ENCODE measurements at regions of chr3 and their contacts with region 1.

Region 1: DNA sequence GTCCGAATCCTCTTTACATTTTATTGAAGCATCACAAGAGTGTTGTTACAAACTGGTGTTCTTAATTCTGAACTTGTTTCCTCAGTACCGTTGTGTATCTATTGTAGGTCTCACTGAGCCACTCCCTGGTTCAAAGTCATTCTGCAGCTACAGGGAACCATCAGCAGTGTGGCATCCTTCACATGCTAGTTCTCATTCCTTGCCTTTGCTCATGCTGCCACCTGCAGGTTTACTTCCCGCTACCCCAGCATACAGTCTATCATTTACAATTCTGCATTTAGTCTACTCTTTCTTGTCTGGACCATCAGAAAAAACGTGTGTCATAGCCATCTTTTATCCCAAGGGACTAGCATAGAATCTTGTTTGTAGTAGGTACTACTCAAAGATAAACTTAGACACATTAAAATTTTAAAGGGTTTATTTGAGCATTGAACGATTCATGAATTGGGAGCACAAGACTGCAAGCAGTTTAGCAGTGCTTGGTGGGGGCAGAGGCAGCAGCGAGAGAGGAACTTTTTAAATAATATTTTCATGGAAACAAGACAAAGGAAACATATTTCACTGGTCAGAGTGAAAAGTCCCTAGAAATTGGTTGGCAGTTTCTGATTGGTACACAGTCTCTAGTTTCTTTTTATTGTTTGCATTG is 402.1 kb downstream of the CADM2 start:
- DNase-seq: peak; percentile 58
- ATAC-seq: peak; percentile 100
- H3K4me3 ChIP-seq: no peak overlapping the region
- H3K27ac ChIP-seq: no peak overlapping the region
- H3K4me1 ChIP-seq: no peaks in the 10 kb centered on the region
- H3K27me3 ChIP-seq: no peaks in the 10 kb centered on the region
- CTCF ChIP-seq: peak; percentile 79
- EP300 ChIP-seq: no peak
- POLR2A ChIP-seq: no peak
- RAD21 ChIP-seq: peak; percentile 58

Region 2: GRCh38 chr3:84547971-84548970 is 812.6 kb before region 1 on chr3:
- CTCF ChIA-PET with region 1: interaction called, 14 read pairs
- POLR2A ChIA-PET with region 1: no interaction called
- in situ Hi-C with region 1: loop called (anchors 10 kb)
- intact Hi-C with region 1: loop called (anchors 1 kb)
- DNase-seq: peak; percentile 36
- ATAC-seq: peak; percentile 97
- H3K4me3 ChIP-seq: peak overlapping the region in 2 of 3 experiments; percentile 15 to 54; a peak in 2 of 6 replicates
- H3K27ac ChIP-seq: no peak overlapping the region
- H3K4me1 ChIP-seq: peaks cover 8% of the 10 kb centered on the region
- H3K27me3 ChIP-seq: no peaks in the 10 kb centered on the region
- CTCF ChIP-seq: peak; percentile 75
- EP300 ChIP-seq: no peak
- POLR2A ChIP-seq: no peak
- RAD21 ChIP-seq: peak; percentile 32; the same call in 1 of the 2 replicates

Region 3: GRCh38 chr3:84958495-84959469 is 402.1 kb before region 1 on chr3 and contains the start of gene CADM2:
- CTCF ChIA-PET with region 1: no interaction called
- POLR2A ChIA-PET with region 1: no interaction called
- in situ Hi-C with region 1: loop called (anchors 25 kb)
- intact Hi-C with region 1: no loop called
- DNase-seq: peak; percentile 76
- ATAC-seq: peak; percentile 99
- H3K4me3 ChIP-seq: peak within 1 kb of the TSS; percentile 54 to 74 (median 65); a peak in 5 of 6 replicates
- H3K27ac ChIP-seq: no peak within 1 kb of the TSS
- H3K4me1 ChIP-seq: peaks cover 14% of the 10 kb centered on the region
- H3K27me3 ChIP-seq: peaks cover 1 to 24% of the 10 kb centered on the region in 2 experiments; a peak in 3 of 5 replicates
- CTCF ChIP-seq: peak; percentile 42
- EP300 ChIP-seq: no peak
- POLR2A ChIP-seq: no peak
- RAD21 ChIP-seq: no peak
- total RNA-seq, gene CADM2: not detected in 2 replicates

Region 4: DNA sequence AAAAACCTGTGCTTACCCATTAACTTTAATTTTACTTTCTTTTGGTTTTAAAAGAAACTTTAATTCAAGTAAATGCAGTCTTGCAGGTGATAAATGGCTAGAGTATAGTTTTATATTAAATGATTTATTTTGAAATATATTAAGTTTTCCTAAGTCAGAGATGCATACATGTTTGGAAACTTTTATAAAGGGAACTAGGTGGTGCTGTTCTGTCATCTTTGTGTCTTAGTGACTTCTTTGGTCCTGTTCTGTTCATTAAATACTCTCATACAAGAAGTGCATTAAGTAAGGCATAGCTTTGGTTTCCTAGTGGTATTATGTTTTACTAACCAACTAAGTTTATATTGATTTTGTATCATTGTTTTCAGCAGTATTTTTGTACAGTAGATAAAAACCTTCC is 386.5 kb before region 1 on chr3:
- CTCF ChIA-PET with region 1: no interaction called
- POLR2A ChIA-PET with region 1: no interaction called
- in situ Hi-C with region 1: loop called (anchors 25 kb)
- intact Hi-C with region 1: loop called (anchors 2 kb)
- DNase-seq: peak; percentile 15
- ATAC-seq: peak; percentile 50; the same call in 1 of the 3 replicates
- H3K4me3 ChIP-seq: no peak overlapping the region
- H3K27ac ChIP-seq: no peak overlapping the region
- H3K4me1 ChIP-seq: no peaks in the 10 kb centered on the region
- H3K27me3 ChIP-seq: no peaks in the 10 kb centered on the region; a peak in 1 of 5 replicates
- CTCF ChIP-seq: peak; percentile 39
- EP300 ChIP-seq: no peak
- POLR2A ChIP-seq: no peak
- RAD21 ChIP-seq: no peak

Region 5: DNA sequence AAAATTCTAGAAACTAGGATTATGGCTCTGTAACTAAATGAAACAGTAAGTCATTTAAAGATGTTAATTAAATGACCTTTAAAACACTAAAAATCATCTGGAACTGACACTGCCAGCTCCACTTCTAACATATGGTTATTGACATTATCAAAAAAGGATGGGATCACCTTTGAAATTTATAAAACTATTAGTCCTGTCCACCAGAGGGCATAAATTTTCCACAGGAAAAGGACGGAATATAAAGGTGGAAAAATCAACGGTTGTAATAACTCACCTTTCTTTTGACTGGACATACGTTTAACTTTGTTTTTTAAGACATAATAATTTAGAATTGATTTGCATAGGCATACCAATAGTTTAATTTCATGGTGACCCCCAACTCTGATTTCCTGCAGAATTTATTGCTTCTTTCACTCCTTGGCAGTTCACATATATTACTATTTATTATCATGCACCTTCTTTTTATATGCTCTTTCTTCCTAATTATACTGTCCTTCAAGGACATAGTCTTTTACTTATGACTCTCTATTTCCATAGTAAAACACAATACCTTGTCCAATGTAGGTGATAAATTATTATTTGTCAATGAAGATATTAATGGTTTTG is 56.4 kb before region 1 on chr3:
- CTCF ChIA-PET with region 1: interaction called, 9 read pairs
- POLR2A ChIA-PET with region 1: no interaction called
- in situ Hi-C with region 1: no loop called
- intact Hi-C with region 1: loop called (anchors 1 kb)
- DNase-seq: peak; percentile 3
- ATAC-seq: peak; percentile 32; the same call in 1 of the 3 replicates
- H3K4me3 ChIP-seq: no peak overlapping the region
- H3K27ac ChIP-seq: no peak overlapping the region
- H3K4me1 ChIP-seq: no peaks in the 10 kb centered on the region
- H3K27me3 ChIP-seq: no peaks in the 10 kb centered on the region; a peak in 1 of 5 replicates
- CTCF ChIP-seq: peak; percentile 32
- EP300 ChIP-seq: no peak
- POLR2A ChIP-seq: no peak
- RAD21 ChIP-seq: no peak

Region 6: DNA sequence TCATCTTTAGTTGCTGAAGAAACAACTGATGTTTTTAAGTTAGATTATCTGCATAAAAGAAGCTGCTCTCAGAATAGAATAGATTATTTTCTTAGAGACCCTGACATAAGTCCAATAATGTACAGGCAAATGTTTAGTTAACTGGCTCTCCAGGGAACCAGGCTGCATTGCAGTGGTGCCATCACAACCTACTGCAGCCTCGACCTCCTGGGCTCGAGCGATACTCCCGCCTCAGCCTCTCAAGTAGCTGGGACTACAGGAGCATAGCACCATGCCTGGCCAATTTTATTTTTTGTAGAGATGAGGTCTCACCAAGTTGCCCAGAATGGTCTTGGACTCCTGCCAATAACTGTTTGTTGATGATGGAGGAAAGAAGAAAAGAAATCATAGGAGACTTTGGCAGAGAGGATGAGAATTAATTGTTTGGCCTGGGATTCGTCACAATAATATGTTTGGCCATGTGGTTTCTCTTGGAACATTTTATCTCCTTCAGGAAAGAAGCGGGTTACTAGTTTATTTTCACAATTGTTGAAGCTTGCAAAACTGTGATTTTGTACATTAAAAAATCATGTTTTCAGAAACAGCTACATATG is 27.1 kb after region 1 on chr3:
- CTCF ChIA-PET with region 1: no interaction called
- POLR2A ChIA-PET with region 1: no interaction called
- in situ Hi-C with region 1: no loop called
- intact Hi-C with region 1: no loop called
- DNase-seq: no peak
- ATAC-seq: no peak
- H3K4me3 ChIP-seq: no peak overlapping the region
- H3K27ac ChIP-seq: no peak overlapping the region
- H3K4me1 ChIP-seq: no peaks in the 10 kb centered on the region
- H3K27me3 ChIP-seq: no peaks in the 10 kb centered on the region
- CTCF ChIP-seq: no peak
- EP300 ChIP-seq: no peak
- POLR2A ChIP-seq: no peak
- RAD21 ChIP-seq: no peak

Region 7: GRCh38 chr3:85567071-85567676 is 206.3 kb after region 1 on chr3:
- CTCF ChIA-PET with region 1: no interaction called
- POLR2A ChIA-PET with region 1: no interaction called
- in situ Hi-C with region 1: no loop called
- intact Hi-C with region 1: loop called (anchors 2 kb)
- DNase-seq: peak; percentile 38
- ATAC-seq: peak; percentile 84
- H3K4me3 ChIP-seq: no peak overlapping the region
- H3K27ac ChIP-seq: no peak overlapping the region
- H3K4me1 ChIP-seq: no peaks in the 10 kb centered on the region
- H3K27me3 ChIP-seq: no peaks in the 10 kb centered on the region
- CTCF ChIP-seq: peak; percentile 68
- EP300 ChIP-seq: no peak
- POLR2A ChIP-seq: no peak
- RAD21 ChIP-seq: no peak

Measured in HepG2 (cell line).